A673 (cell line): ENCODE measurements at regions of chr2 and their contacts with region 1.

Region 1: GRCh38 chr2:222494104-222494739 is 69.9 kb downstream of the SGPP2 start:
- DNase-seq: peak; percentile 64
- H3K4me3 ChIP-seq: no peak overlapping the region
- H3K27ac ChIP-seq: no peak overlapping the region
- H3K4me1 ChIP-seq: peaks cover 23% of the 10 kb centered on the region
- H3K27me3 ChIP-seq: no peaks in the 10 kb centered on the region
- CTCF ChIP-seq: no peak

Region 2: GRCh38 chr2:222468346-222468745 is 25.9 kb before region 1 on chr2:
- CTCF ChIA-PET with region 1: no interaction called
- POLR2A ChIA-PET with region 1: interaction called, 11 read pairs
- intact Hi-C with region 1: no loop called
- DNase-seq: no peak
- H3K4me3 ChIP-seq: no peak overlapping the region
- H3K27ac ChIP-seq: no peak overlapping the region
- H3K4me1 ChIP-seq: peaks cover 4% of the 10 kb centered on the region
- H3K27me3 ChIP-seq: no peaks in the 10 kb centered on the region
- CTCF ChIP-seq: no peak

Region 3: GRCh38 chr2:222837511-222838056 is 343.4 kb after region 1 on chr2:
- CTCF ChIA-PET with region 1: no interaction called
- POLR2A ChIA-PET with region 1: no interaction called
- intact Hi-C with region 1: no loop called
- DNase-seq: no peak
- H3K4me3 ChIP-seq: no peak overlapping the region
- H3K27ac ChIP-seq: no peak overlapping the region
- H3K4me1 ChIP-seq: no peaks in the 10 kb centered on the region
- H3K27me3 ChIP-seq: no peaks in the 10 kb centered on the region
- CTCF ChIP-seq: no peak